ENCODE measurements at regions of chr2 and their contacts with region 1.

Region 1: GRCh38 chr2:73828818-73829570 is at the start of gene STAMBP:
- DNase-seq: peak; percentile 73
- H3K4me3 ChIP-seq: peak within 1 kb of the TSS; percentile 81
- H3K27me3 ChIP-seq: no peaks in the 10 kb centered on the region; the same call in 1 of the 2 replicates
- CTCF ChIP-seq: no peak
- polyA plus RNA-seq, gene STAMBP: 47.9 and 48.4 TPM in 2 replicates

Region 2: DNA sequence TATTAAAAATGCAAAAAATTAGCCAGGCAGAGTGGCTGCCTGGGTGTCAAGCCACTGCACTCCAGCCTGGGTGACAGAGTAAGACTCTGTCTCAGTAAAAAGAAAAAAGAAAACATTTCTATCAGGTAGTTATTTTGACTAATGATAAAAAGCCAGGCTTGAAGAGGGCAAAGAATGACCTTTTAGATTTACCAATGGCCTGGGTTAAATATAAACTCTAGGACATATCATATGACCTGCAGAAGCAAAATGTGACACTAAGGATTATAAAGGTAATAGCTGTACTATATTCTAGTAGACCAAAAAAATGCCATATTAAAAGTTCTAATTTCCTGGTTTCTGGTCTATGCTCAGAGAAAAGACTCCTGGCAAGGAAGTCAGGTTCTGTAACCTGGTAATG is 16.4 kb before region 1 on chr2:
- CTCF ChIA-PET with region 1: interaction called, 11 read pairs
- POLR2A ChIA-PET with region 1: no interaction called
- DNase-seq: no peak
- H3K4me3 ChIP-seq: no peak overlapping the region
- H3K27me3 ChIP-seq: peaks cover 13% of the 10 kb centered on the region
- CTCF ChIP-seq: no peak

Region 3: DNA sequence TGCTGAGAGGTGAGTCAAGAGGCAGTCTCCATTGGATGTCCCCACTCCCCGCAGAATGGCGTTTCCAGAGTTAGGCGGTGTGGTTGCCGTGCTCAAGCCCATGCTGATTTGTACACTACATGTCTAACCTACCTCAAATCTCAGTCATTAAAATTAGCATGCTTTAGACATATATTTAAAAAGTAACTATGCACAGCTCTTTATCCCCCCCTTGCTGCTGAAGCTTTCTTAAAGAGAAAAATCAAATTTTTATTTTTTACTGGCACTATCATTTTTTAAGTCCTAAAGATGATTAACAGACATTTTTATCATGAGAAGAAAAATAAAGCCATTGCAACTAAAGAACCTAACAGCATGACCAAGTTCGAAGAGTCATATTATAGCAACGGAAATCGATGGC is 275.8 kb after region 1 on chr2:
- CTCF ChIA-PET with region 1: interaction called, 11 read pairs
- POLR2A ChIA-PET with region 1: no interaction called
- DNase-seq: no peak
- H3K4me3 ChIP-seq: no peak overlapping the region
- H3K27me3 ChIP-seq: no peaks in the 10 kb centered on the region
- CTCF ChIP-seq: peak; percentile 24; the same call in 1 of the 2 replicates

Region 4: DNA sequence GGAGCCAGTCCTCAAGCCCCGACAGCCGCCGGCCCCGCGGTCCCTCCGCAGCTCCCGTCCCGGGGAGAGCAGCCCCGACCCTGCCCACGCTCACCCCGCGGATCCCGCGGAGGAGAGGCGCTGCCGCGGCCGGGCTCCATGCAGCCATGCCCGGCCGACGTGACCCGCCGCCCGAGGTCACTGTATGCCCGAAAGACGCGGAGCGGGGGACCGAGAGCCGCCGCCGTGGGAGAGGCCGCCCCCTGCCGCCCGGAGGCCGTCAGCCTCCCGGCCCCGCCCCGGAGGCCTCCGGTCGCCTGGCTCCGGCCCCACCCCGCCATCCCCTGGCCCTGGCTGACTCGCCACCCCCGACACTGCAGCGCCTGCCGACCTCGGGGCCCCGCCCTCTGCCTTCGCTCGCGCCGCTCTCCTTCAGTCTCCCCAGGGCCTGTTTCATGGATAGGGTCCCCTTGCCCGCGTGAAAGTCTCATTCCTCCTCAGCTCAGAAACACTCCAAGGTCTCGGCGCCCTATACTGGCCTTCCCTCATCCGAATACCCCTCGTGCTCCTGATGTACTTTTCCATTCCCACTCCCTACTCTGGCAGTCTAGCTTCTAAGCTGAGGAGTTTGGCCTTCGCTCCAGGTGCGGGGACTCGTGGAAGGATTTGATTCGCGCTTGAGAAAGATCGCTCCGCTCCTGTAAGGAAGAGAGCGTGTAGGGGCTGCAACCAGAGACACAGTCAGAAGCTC is 318.9 kb after region 1 on chr2 and contains the start of gene BOLA3:
- CTCF ChIA-PET with region 1: interaction called, 57 read pairs
- POLR2A ChIA-PET with region 1: no interaction called
- DNase-seq: no peak
- H3K4me3 ChIP-seq: peak within 1 kb of the TSS; percentile 53
- H3K27me3 ChIP-seq: no peaks in the 10 kb centered on the region
- CTCF ChIP-seq: peak; percentile 23
- polyA plus RNA-seq, gene BOLA3: 11.4 and 35.9 TPM in 2 replicates

Region 5: DNA sequence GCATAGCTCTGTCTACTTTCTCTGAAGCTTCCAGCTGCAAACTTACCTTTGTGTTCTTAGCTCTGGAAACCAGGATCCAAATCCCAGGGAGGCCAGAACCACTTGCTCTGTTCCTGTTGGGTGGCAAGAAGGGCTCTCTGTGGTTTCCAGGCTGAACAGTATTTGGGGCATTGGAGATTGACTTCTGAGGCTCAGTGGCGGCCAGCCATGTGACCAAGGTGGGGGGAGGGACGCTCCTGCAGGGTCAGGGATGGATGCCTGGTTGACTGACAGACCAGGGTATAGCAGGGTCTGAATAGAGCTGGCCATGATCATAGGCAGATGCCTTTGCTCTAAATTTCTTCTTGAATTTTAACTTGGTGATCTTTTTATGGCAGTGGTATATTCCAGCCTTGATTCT is 499.1 kb after region 1 on chr2:
- CTCF ChIA-PET with region 1: interaction called, 75 read pairs
- POLR2A ChIA-PET with region 1: no interaction called
- DNase-seq: no peak
- H3K4me3 ChIP-seq: no peak overlapping the region
- H3K27me3 ChIP-seq: no peaks in the 10 kb centered on the region; the same call in none of the 2 replicates
- CTCF ChIP-seq: no peak